ENCODE measurements at regions of chr6 and their contacts with region 1.

Region 1: DNA sequence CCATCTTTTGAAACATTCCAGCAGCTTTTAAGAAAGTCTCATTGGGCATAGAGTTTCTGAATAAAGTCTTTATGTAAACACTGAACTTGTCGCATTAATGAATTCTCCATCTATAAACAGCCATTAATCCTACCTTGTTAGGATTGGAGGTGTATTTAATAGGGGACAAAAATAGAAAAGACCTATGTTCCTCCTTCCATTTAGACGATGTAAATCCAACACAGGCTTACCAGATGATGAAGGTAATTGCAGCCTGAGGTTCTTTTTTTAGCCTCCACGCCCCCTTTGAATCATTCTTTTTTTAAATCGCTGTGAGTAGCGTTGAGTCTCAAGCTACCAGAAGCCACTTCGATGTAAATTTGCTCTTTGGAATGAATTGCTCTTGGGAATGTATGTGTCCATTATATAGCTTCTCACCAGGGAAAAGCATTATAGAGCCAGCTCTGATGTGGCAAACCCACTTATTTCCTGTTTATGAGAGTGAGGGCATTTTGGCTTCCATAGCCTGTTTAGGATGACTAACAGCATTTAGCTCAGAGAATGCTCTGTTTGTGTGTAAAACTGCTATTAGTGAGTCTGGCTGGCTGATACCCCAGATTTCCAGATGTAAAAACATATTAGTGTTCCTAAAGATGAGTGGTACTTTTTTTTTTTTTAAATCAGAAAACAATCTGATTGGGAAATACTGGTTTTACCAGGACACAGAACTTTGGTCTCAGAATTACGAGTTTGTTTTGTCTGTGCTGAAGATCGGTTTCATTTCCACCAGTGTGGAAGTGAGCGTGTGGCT is 74.9 kb upstream of the CLDN20 start:
- DNase-seq: peak; percentile 93
- H3K4me3 ChIP-seq: no peak overlapping the region
- H3K27ac ChIP-seq: peak overlapping the region; percentile 30
- H3K4me1 ChIP-seq: peaks cover 29% of the 10 kb centered on the region
- H3K27me3 ChIP-seq: no peaks in the 10 kb centered on the region
- CTCF ChIP-seq: no peak

Region 2: DNA sequence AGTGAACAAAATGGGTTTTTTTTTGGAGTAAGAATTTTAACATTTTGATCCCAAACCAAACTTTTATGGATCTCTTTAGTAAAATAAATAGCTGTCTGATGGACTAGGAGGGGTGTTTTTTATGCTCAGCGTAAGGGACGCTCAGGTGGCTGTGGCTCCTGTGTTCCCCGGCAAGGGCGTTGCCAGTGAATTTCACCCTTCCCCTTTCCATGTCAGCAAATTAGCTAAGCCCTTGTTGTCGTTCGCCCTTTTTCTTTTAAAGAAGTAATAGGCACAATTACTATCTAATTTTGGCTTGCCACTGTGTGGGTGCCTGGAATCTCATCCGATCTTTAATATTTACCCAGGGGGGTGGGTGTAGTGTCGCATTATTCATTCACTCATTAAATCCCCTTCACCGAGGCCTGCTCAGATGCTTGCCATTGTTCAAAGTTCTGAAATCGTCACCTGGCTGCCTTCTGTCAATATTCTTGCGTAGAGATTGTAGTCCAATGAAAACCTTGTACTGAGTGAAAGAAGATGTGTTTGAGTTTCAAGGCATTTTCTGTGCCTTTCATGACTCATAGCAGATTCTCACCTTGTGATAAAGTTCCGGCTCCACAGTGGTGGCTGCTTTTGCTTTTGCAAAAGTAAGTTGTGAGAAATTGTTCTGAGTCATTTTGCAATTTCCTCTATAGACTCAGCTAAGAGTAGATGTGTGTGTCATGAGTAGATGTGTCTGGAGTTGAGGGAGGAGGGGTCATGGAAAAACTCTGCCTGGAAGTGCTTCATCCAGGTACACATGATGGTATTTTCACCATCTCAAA is 34.9 kb after region 1 on chr6:
- CTCF ChIA-PET with region 1: no interaction called
- dilution Hi-C with region 1: no loop called
- in situ Hi-C with region 1: no loop called
- intact Hi-C with region 1: loop called (anchors 2 kb)
- DNase-seq: peak; percentile 97
- H3K4me3 ChIP-seq: no peak overlapping the region
- H3K27ac ChIP-seq: peak overlapping the region; percentile 61
- H3K4me1 ChIP-seq: peaks cover 33% of the 10 kb centered on the region
- H3K27me3 ChIP-seq: no peaks in the 10 kb centered on the region
- CTCF ChIP-seq: no peak

Region 3: GRCh38 chr6:157021344-157021992 is 1832.6 kb after region 1 on chr6:
- CTCF ChIA-PET with region 1: no interaction called
- dilution Hi-C with region 1: no loop called
- in situ Hi-C with region 1: no loop called
- intact Hi-C with region 1: no loop called
- DNase-seq: peak; percentile 84
- H3K4me3 ChIP-seq: peak overlapping the region; percentile 72 to 87 (median 85)
- H3K27ac ChIP-seq: peak overlapping the region; percentile 97
- H3K4me1 ChIP-seq: peaks cover 17% of the 10 kb centered on the region
- H3K27me3 ChIP-seq: no peaks in the 10 kb centered on the region
- CTCF ChIP-seq: peak in 1 of 2 donors; percentile 36